GM12878 (cell line): ENCODE measurements at regions of chr1 and their contacts with region 1.

Region 1: DNA sequence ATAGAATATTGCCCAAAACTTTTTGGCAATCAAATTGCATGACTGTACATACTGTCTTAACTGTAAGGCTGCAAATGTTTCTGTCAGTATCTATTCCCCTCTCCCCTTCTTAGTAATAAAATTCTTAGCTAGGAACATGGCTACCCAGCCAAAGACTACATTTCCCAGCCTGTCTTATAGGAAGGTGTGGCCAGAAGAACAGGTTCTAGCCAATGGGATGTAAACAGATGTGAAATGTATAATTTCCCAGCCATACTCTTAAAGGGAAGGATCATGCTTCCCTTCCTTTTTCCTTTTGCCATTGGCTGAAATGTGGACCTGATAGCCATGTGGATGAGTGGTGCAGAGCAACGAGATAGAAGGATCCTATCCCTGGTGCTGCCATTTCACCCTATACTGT is 7.0 kb upstream of the HIVEP3 start:
- DNase-seq: no peak
- ATAC-seq: peak; percentile 48; the same call in 2 of the 3 replicates
- H3K4me3 ChIP-seq: no peak overlapping the region
- H3K27ac ChIP-seq: no peak overlapping the region
- H3K4me1 ChIP-seq: no peaks in the 10 kb centered on the region
- H3K27me3 ChIP-seq: no peaks in the 10 kb centered on the region
- CTCF ChIP-seq: no peak
- EP300 ChIP-seq: no peak
- POLR2A ChIP-seq: no peak
- RAD21 ChIP-seq: no peak

Region 2: DNA sequence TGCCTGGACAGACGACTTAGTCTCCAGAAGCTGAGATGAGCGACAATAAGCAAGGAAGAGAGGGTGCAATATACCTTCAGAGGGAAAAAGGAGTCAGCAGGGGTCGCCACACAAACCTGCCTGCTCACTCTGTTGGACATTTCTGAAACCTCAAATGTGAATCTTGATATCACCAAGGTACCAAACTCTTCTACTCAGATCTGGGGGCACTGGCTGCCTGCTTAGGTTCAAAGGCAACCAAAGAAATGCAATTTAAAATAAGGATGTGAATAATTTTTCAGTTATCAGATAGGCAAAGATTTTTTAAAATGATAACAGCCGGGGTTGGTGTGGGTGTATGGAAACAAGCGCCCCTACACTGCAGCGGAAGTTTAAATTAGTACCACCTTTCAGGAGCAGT is 171.2 kb before region 1 on chr1:
- CTCF ChIA-PET with region 1: no interaction called
- POLR2A ChIA-PET with region 1: no interaction called
- RAD21 ChIA-PET with region 1: no interaction called
- SMC1A ChIA-PET with region 1: no interaction called
- in situ Hi-C with region 1: no loop called
- intact Hi-C with region 1: no loop called
- DNase-seq: no peak
- ATAC-seq: 0 out of 3 replicates have a peak, but pooled peaks have one; percentile 3
- H3K4me3 ChIP-seq: no peak overlapping the region
- H3K27ac ChIP-seq: no peak overlapping the region
- H3K4me1 ChIP-seq: peaks cover 48% of the 10 kb centered on the region
- H3K27me3 ChIP-seq: no peaks in the 10 kb centered on the region
- CTCF ChIP-seq: peak; percentile 39 to 45 (median 40); a peak in 5 of 6 replicates
- EP300 ChIP-seq: no peak
- POLR2A ChIP-seq: no peak
- RAD21 ChIP-seq: peak; percentile 57

Region 3: DNA sequence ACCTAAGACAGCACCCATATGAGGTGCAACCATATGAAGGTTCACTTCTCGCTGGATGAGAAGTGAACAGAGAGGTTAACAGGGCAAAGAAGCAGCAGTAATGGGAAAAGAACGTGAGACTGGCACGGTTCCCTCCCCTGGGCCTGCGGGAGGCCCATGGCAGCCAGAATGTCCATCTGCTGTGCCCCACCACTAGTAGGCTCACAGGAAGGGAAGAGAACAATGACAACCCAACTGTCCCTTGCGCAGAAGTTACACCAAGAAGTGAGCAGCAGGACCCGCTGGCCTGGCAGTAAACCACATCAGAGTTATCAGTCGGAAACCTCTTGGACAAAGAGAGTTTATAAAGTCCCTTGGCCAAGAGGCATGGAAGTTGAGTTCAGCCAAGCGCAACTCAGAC is 18.3 kb before region 1 on chr1:
- CTCF ChIA-PET with region 1: interaction called, 4 read pairs
- POLR2A ChIA-PET with region 1: interaction called, 5 read pairs
- RAD21 ChIA-PET with region 1: no interaction called
- SMC1A ChIA-PET with region 1: interaction called, 14 read pairs
- in situ Hi-C with region 1: no loop called
- intact Hi-C with region 1: no loop called
- DNase-seq: no peak
- ATAC-seq: no peak
- H3K4me3 ChIP-seq: no peak overlapping the region
- H3K27ac ChIP-seq: no peak overlapping the region
- H3K4me1 ChIP-seq: peaks cover 17% of the 10 kb centered on the region
- H3K27me3 ChIP-seq: no peaks in the 10 kb centered on the region
- CTCF ChIP-seq: no peak
- EP300 ChIP-seq: no peak
- POLR2A ChIP-seq: no peak
- RAD21 ChIP-seq: no peak

Region 4: DNA sequence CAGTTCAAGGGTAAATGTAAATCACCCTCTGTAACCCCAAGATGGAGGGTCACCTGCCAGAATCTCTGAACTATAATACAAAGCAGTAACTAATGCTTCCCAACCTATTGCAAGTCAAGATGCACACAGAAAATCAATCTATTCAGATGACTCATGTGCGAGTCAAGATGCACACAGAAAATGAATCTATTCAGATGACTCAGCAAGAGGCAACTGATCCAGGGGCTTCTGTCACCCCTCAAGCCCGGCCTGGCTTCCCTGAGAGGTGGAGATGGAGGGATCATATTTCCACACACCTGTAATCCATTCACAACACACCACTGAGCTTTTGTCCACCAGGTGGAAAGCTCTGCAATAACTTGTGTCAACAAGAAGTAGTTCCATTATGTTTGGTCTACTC is 10.4 kb after region 1 on chr1:
- CTCF ChIA-PET with region 1: no interaction called
- POLR2A ChIA-PET with region 1: no interaction called
- RAD21 ChIA-PET with region 1: no interaction called
- SMC1A ChIA-PET with region 1: interaction called, 13 read pairs
- in situ Hi-C with region 1: no loop called
- intact Hi-C with region 1: no loop called
- DNase-seq: no peak
- ATAC-seq: peak; percentile 84
- H3K4me3 ChIP-seq: no peak overlapping the region
- H3K27ac ChIP-seq: no peak overlapping the region
- H3K4me1 ChIP-seq: no peaks in the 10 kb centered on the region
- H3K27me3 ChIP-seq: no peaks in the 10 kb centered on the region
- CTCF ChIP-seq: no peak
- EP300 ChIP-seq: no peak
- POLR2A ChIP-seq: no peak
- RAD21 ChIP-seq: no peak